MCF 10A (cell line): ENCODE measurements at regions of chr5 and their contacts with region 1.

Region 1: DNA sequence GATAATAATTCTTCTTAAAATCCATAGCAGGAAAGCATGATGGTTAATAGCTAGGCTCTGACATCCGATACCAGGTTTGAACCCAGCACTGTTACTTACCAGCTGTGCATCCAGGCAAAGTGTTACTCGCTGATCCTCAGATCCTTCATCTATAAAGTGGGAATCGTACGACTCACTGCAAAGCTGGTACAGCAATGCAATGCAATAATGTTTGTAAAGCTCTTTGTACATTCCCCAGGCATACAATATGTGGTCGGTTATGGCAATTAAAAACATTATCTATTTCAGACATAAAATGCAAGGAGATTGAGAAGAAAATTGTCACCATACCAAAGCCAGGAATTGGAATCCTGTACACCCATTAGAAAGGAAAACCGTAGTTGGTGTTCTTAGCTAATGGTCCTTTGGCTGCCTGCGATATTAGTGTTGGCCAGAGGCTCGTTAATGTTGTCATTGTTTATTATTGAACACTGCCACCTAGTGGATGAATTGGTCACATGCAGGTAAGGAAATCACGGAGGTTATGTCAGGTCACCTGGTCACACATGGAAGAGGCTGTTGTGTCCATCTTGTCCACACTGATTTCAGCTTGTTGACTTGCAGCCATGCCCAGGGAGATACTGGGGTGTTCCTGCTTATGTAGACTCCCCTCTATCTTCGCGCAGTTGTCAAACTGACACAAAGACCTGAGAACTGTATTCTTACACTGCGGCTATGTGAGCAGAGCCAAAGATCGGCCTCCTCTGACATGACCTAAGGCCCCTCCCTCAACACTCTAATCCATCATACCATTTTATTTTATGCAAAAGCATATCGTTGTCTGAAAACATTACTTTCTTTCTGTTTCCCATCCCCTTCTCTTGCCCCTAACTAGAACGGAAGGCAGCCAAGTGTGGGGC is 87.5 kb upstream of the PPP2R2B start:
- DNase-seq: peak; percentile 89
- H3K4me3 Mint-ChIP-seq: no peak overlapping the region
- H3K27ac Mint-ChIP-seq: no peak overlapping the region
- H3K4me1 Mint-ChIP-seq: peaks cover 11% of the 10 kb centered on the region
- H3K27me3 Mint-ChIP-seq: peaks cover 24% of the 10 kb centered on the region
- CTCF ChIP-seq: peak; percentile 89

Region 2: GRCh38 chr5:146533260-146533857 is 432.7 kb before region 1 on chr5:
- CTCF ChIA-PET with region 1: interaction called, 485 read pairs
- POLR2A ChIA-PET with region 1: no interaction called
- intact Hi-C with region 1: loop called (anchors 1 kb)
- DNase-seq: peak; percentile 90
- H3K4me3 Mint-ChIP-seq: no peak overlapping the region
- H3K27ac Mint-ChIP-seq: no peak overlapping the region
- H3K4me1 Mint-ChIP-seq: peaks cover 8% of the 10 kb centered on the region
- H3K27me3 Mint-ChIP-seq: no peaks in the 10 kb centered on the region
- CTCF ChIP-seq: peak; percentile 96

Region 3: DNA sequence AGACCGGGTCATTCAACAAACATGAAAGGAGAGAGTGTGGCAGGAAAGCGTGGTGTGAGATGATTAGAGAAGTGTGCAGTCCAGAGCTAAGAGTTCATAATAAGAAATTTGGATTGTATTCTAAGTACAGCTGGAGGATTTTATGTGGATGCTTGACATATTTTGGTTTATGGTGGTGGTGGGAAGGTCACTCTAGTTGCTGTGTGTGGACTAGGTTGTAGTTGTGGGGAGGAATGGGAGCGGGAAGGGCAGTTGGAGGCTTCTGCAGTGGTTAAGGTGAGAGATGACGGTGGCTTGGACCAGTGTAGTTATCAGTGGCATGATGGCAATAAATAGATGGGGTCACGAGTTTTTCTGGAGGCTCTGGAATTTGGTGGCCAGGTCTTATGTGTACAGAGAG is 404.3 kb before region 1 on chr5:
- CTCF ChIA-PET with region 1: interaction called, 32 read pairs
- POLR2A ChIA-PET with region 1: no interaction called
- intact Hi-C with region 1: no loop called
- DNase-seq: no peak
- H3K4me3 Mint-ChIP-seq: no peak overlapping the region
- H3K27ac Mint-ChIP-seq: no peak overlapping the region
- H3K4me1 Mint-ChIP-seq: no peaks in the 10 kb centered on the region
- H3K27me3 Mint-ChIP-seq: no peaks in the 10 kb centered on the region
- CTCF ChIP-seq: no peak

Region 4: DNA sequence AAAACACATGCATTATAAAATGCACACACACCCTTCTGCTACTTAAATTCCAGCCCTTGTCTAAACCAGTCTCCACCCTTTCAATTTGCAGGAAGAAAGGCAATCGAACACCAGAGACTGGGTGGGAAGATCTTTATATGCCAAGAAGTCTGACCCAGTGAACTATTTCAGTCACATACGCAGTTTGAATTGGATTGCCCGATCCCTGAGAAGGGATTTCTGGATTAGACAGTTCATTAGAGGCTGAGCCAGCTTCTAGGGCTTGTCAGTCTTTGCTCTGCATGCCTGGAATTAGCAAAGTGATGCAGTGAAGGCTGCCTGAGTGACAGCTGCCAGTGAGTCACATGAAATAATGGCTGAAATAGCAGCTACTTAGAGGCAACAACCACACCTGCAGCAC is 247.4 kb before region 1 on chr5:
- CTCF ChIA-PET with region 1: interaction called, 10 read pairs
- POLR2A ChIA-PET with region 1: no interaction called
- intact Hi-C with region 1: no loop called
- DNase-seq: no peak
- H3K4me3 Mint-ChIP-seq: no peak overlapping the region
- H3K27ac Mint-ChIP-seq: no peak overlapping the region
- H3K4me1 Mint-ChIP-seq: peaks cover 11% of the 10 kb centered on the region
- H3K27me3 Mint-ChIP-seq: no peaks in the 10 kb centered on the region
- CTCF ChIP-seq: no peak

Region 5: GRCh38 chr5:147188200-147189108 is 222.4 kb after region 1 on chr5:
- CTCF ChIA-PET with region 1: interaction called, 109 read pairs
- POLR2A ChIA-PET with region 1: interaction called, 5 read pairs
- intact Hi-C with region 1: loop called (anchors 1 kb)
- DNase-seq: peak; percentile 82
- H3K4me3 Mint-ChIP-seq: no peak overlapping the region
- H3K27ac Mint-ChIP-seq: no peak overlapping the region
- H3K4me1 Mint-ChIP-seq: no peaks in the 10 kb centered on the region
- H3K27me3 Mint-ChIP-seq: no peaks in the 10 kb centered on the region
- CTCF ChIP-seq: peak; percentile 91